Tibial artery (tissue), 4 donors: ENCODE measurements at regions of chr1 and their contacts with region 1.

Region 1: GRCh38 chr1:91885716-91886506 is at the start of gene TGFBR3:
- DNase-seq: peak; percentile 93 to 96
- H3K4me3 ChIP-seq: peak within 1 kb of the TSS; percentile 85 to 94
- H3K27ac ChIP-seq: peak within 1 kb of the TSS; percentile 90 to 91
- H3K4me1 ChIP-seq: peaks cover 0 to 27% (median 10%) of the 10 kb centered on the region in 4 donors
- H3K27me3 ChIP-seq: no peaks in the 10 kb centered on the region
- CTCF ChIP-seq: peak; percentile 51 to 52

Region 2: GRCh38 chr1:91732291-91733107 is 153.4 kb before region 1 on chr1:
- intact Hi-C with region 1: loop called (anchors 10 kb)
- DNase-seq: no peak
- H3K4me3 ChIP-seq: no peak overlapping the region
- H3K27ac ChIP-seq: peak overlapping the region; percentile 32 to 44
- H3K4me1 ChIP-seq: peaks cover 0 to 44% (median 26%) of the 10 kb centered on the region in 4 donors
- H3K27me3 ChIP-seq: no peaks in the 10 kb centered on the region
- CTCF ChIP-seq: no peak